Endothelial cell of umbilical vein (primary cell): ENCODE measurements at regions of chr20 and their contacts with region 1.

Region 1: GRCh38 chr20:50815162-50815989 is 20.5 kb downstream of the BCAS4 start:
- DNase-seq: no peak
- H3K4me3 ChIP-seq: no peak overlapping the region
- H3K27ac ChIP-seq: no peak overlapping the region
- H3K4me1 ChIP-seq: no peaks in the 10 kb centered on the region
- H3K27me3 ChIP-seq: no peaks in the 10 kb centered on the region
- CTCF ChIP-seq: no peak
- POLR2A ChIP-seq: no peak

Region 2: DNA sequence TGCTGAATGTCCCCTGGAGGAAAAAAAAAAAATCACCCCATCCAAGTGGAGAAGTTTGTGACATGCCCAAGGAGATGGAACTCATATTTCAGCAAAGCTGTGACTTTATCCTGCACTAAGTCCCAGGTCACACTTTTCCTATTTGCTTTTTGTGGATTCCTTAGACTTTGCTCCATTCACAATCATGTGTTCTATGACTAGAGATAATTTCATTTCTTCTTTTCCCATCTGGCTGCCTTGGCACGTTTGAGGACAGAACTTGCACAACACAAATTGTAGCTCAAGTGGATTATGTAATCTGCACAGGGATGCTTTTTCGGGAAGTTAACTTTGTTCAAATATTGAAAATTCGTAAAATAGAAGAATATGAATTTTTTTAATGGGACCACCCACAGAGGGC is 405.9 kb before region 1 on chr20:
- CTCF ChIA-PET with region 1: no interaction called
- POLR2A ChIA-PET with region 1: no interaction called
- dilution Hi-C with region 1: no loop called
- intact Hi-C with region 1: no loop called
- DNase-seq: no peak
- H3K4me3 ChIP-seq: no peak overlapping the region
- H3K27ac ChIP-seq: no peak overlapping the region
- H3K4me1 ChIP-seq: no peaks in the 10 kb centered on the region
- H3K27me3 ChIP-seq: peaks cover 6 to 9% of the 10 kb centered on the region in 2 experiments
- CTCF ChIP-seq: no peak
- POLR2A ChIP-seq: no peak

Region 3: GRCh38 chr20:50891138-50891537 is 75.8 kb after region 1 on chr20:
- CTCF ChIA-PET with region 1: no interaction called
- POLR2A ChIA-PET with region 1: no interaction called
- dilution Hi-C with region 1: no loop called
- intact Hi-C with region 1: loop called (anchors 2 kb)
- DNase-seq: no peak
- H3K4me3 ChIP-seq: no peak overlapping the region
- H3K27ac ChIP-seq: no peak overlapping the region
- H3K4me1 ChIP-seq: no peaks in the 10 kb centered on the region
- H3K27me3 ChIP-seq: no peaks in the 10 kb centered on the region
- CTCF ChIP-seq: no peak
- POLR2A ChIP-seq: no peak

Region 4: GRCh38 chr20:50958615-50959542 is 143.5 kb after region 1 on chr20 and contains the start of gene MOCS3:
- CTCF ChIA-PET with region 1: interaction called, 8 read pairs
- POLR2A ChIA-PET with region 1: no interaction called
- dilution Hi-C with region 1: no loop called
- intact Hi-C with region 1: loop called (anchors 1 kb)
- DNase-seq: peak; percentile 94
- H3K4me3 ChIP-seq: peak within 1 kb of the TSS; percentile 55 to 94 (median 80)
- H3K27ac ChIP-seq: peak within 1 kb of the TSS; percentile 96
- H3K4me1 ChIP-seq: peaks cover 24% of the 10 kb centered on the region
- H3K27me3 ChIP-seq: no peaks in the 10 kb centered on the region
- CTCF ChIP-seq: no peak
- POLR2A ChIP-seq: no peak
- total RNA-seq, gene MOCS3: 3.6 and 4.2 TPM in 2 replicates